ENCODE measurements at regions of chr15 and their contacts with region 1.

Region 1: DNA sequence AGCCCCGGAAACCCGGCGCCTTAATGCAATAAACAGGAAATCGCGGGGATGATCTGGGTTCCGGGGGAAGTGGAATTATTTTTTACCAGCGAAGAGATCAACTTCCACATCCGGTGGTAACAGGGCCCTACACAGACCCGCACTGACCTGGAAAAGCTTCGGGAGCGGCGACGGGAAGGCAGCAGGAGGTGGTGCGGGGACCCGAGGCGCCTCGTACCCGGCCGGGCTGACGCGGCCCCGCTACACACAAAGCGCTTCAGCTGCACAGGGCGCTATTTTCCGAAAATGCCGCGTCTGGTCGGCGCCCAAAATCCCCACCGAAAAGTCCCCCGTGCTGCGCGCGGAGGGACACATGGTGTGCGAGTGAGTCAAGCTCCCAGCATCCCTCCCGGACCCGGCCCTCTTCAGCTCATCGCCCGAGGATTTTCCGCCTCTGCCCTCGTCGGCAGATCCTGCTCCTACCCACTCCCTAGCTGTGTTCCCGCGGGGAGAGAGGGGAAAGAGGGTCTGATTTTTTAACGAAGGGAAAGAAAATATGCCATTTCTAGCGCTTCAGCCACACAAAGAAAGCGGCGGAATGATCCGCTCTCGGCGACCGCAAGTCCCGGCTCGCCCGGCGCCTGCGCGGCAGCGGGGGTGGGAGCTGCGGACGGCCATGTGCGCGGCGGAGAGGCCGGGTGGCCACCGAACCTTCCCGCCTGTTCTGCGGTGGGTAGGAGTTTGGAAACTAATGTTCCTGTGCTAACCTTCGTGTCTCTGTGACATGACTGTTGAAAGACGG is at the start of gene GABPB1:
- DNase-seq: peak; percentile 90
- H3K4me3 Mint-ChIP-seq: peak within 1 kb of the TSS; percentile 94
- H3K27ac Mint-ChIP-seq: peak within 1 kb of the TSS; percentile 98
- H3K4me1 Mint-ChIP-seq: peaks cover 28% of the 10 kb centered on the region
- H3K27me3 Mint-ChIP-seq: no peaks in the 10 kb centered on the region
- CTCF ChIP-seq: no peak
- total RNA-seq, gene GABPB1: 33.4 and 38.5 TPM in 2 replicates

Region 2: DNA sequence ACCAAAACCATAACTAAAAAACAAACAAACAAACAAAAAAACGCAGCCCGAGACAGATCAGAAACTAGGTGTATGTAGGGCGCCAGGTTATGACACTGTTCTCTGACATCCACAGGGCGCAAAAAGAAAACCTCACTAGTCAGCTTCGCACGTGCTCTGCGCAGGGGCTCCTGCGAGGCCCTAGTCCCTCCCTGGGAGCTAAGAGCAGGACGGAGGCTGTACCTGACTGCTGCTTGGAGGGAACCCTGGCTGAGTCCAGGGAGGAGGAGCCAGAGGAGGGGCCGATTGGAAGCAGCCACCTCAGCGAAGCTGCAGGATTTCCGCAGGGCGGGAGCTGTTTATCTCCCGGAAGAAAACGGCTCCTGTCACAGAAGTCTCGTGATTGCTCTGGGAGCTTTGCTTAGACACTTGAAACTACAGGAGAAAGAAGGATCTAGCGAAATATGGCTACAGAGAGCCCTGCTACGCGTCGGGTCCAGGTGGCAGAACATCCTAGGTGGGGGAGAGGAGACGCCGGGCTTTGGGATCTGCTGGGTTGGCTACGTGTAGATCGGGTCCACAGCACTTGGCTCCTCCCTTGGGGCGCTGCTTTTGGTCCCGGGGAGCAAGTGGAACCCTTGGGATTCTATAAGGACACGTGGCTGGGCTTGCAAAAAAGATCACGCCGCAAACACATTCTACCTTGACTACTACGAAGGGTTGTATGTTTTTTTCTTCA is 1185.0 kb before region 1 on chr15 and contains the start of gene GALK2:
- CTCF ChIA-PET with region 1: no interaction called
- POLR2A ChIA-PET with region 1: interaction called, 10 read pairs
- intact Hi-C with region 1: no loop called
- DNase-seq: peak; percentile 95
- H3K4me3 Mint-ChIP-seq: peak within 1 kb of the TSS; percentile 96
- H3K27ac Mint-ChIP-seq: peak within 1 kb of the TSS; percentile 99
- H3K4me1 Mint-ChIP-seq: no peaks in the 10 kb centered on the region
- H3K27me3 Mint-ChIP-seq: no peaks in the 10 kb centered on the region
- CTCF ChIP-seq: no peak
- total RNA-seq, gene GALK2: 41.6 and 43.5 TPM in 2 replicates

Region 3: GRCh38 chr15:49887659-49888322 is 467.2 kb before region 1 on chr15:
- CTCF ChIA-PET with region 1: no interaction called
- POLR2A ChIA-PET with region 1: no interaction called
- intact Hi-C with region 1: no loop called
- DNase-seq: no peak
- H3K4me3 Mint-ChIP-seq: no peak overlapping the region
- H3K27ac Mint-ChIP-seq: no peak overlapping the region
- H3K4me1 Mint-ChIP-seq: no peaks in the 10 kb centered on the region
- H3K27me3 Mint-ChIP-seq: no peaks in the 10 kb centered on the region
- CTCF ChIP-seq: no peak

Region 4: DNA sequence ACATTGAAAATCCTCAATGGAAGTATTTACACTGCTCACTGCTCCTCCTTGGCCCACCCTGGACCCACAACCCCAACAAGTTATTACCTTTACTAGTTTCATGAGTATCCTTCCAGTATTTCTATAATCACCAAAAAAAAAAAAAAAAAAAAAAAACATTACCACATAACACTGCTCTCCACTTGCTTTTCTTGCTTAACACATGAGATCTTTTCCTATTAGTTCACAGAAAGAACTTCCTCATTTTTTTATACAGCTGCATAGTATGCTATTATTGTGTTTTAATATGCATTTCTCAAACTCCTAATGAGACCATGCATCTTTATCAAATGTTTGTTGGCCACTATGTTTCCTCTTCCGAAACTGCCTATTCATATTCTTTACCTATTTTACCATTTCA is 14.6 kb before region 1 on chr15:
- CTCF ChIA-PET with region 1: interaction called, 3 read pairs
- POLR2A ChIA-PET with region 1: interaction called, 14 read pairs
- intact Hi-C with region 1: no loop called
- DNase-seq: no peak
- H3K4me3 Mint-ChIP-seq: no peak overlapping the region
- H3K27ac Mint-ChIP-seq: no peak overlapping the region
- H3K4me1 Mint-ChIP-seq: no peaks in the 10 kb centered on the region
- H3K27me3 Mint-ChIP-seq: no peaks in the 10 kb centered on the region
- CTCF ChIP-seq: no peak

Region 5: GRCh38 chr15:50377867-50378751 is 23.1 kb after region 1 on chr15:
- CTCF ChIA-PET with region 1: interaction called, 4 read pairs
- POLR2A ChIA-PET with region 1: interaction called, 11 read pairs
- intact Hi-C with region 1: no loop called
- DNase-seq: no peak
- H3K4me3 Mint-ChIP-seq: no peak overlapping the region
- H3K27ac Mint-ChIP-seq: no peak overlapping the region
- H3K4me1 Mint-ChIP-seq: no peaks in the 10 kb centered on the region
- H3K27me3 Mint-ChIP-seq: no peaks in the 10 kb centered on the region
- CTCF ChIP-seq: no peak

Region 6: DNA sequence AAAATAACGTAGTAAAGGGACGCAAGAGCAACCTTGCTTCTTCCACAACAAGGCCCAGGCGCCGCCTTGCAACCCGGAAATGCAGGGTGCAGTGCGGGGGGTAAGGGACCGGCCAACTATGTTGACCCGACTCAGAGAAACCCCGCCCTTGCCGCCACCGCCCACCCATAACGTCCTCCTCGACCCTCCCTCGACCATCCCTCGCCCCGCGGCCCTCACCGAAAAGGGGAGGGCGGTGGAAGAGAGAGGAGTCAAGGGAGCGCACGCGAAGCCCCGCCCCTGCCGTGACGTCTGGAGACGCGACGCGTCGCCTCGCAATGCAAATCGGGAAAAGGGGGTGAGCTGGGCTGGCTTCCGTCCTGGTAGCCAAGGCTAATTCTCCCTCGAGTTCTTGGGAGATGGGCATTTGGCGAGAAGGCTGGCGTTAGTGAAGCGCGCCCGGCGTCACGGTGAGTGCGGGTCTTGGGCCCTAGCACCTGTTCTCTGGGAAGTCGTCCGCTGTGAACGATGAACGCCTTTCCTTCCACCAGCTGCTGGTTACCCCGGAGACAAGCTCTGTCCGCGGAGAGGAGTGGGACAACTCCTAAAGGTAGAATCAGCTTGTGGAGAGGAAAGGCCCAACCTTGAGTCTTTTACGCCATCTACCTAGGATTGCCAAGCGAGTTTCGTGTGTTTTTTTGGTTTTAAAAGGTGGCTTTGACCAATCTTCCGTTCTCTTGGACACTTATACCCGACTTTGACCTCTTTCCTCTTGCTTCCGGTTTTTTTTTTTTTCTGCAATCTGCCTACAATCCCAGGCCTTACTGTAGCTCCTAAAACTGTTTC is 69.2 kb after region 1 on chr15 and contains the start of gene USP8:
- CTCF ChIA-PET with region 1: interaction called, 5 read pairs
- POLR2A ChIA-PET with region 1: interaction called, 142 read pairs
- intact Hi-C with region 1: loop called (anchors 2 kb)
- DNase-seq: peak; percentile 98
- H3K4me3 Mint-ChIP-seq: peak within 1 kb of the TSS; percentile 92
- H3K27ac Mint-ChIP-seq: peak within 1 kb of the TSS; percentile 98
- H3K4me1 Mint-ChIP-seq: no peaks in the 10 kb centered on the region
- H3K27me3 Mint-ChIP-seq: no peaks in the 10 kb centered on the region
- CTCF ChIP-seq: no peak
- total RNA-seq, gene USP8: 67.6 and 72.7 TPM in 2 replicates